Astrocyte of the cerebellum (primary cell): ENCODE measurements at regions of chr11 and their contacts with region 1.

Region 1: GRCh38 chr11:62905927-62906531 is 15.1 kb downstream of the CHRM1 start:
- DNase-seq: peak; percentile 70
- H3K4me3 ChIP-seq: no peak overlapping the region
- CTCF ChIP-seq: peak; percentile 100

Region 2: GRCh38 chr11:62958547-62959421 is 52.8 kb after region 1 on chr11:
- in situ Hi-C with region 1: no loop called
- DNase-seq: no peak
- H3K4me3 ChIP-seq: no peak overlapping the region
- CTCF ChIP-seq: no peak

Region 3: DNA sequence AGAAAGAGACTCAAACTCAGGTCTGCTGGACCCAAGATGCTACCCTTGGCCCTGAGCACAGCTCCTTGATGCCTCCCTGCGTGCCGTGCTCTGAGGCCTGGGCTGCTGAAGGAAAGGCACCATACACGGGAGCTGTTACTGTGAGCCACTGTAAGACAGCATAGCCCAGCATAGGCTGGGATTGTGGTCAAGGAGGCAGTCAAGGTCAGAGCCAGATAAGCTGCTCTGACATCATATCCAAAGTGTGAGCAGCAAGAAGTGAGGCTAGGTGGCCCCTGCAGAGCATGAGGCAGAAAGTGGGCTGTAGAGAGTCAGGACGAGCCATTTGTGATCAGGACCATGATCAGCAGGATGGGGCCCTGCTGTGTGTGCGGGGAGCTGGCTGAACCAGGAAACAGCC is 101.9 kb after region 1 on chr11:
- in situ Hi-C with region 1: loop called (anchors 5 kb)
- DNase-seq: no peak
- H3K4me3 ChIP-seq: no peak overlapping the region
- CTCF ChIP-seq: no peak